CD14-positive monocyte (primary cell): ENCODE measurements at regions of chr5 and their contacts with region 1.

Region 1: GRCh38 chr5:61408476-61409168 is 76.6 kb downstream of the ZSWIM6 start:
- DNase-seq: peak; percentile 99 to 100 (median 100)
- H3K4me3 ChIP-seq: peak overlapping the region; percentile 18 to 70 (median 47)
- H3K4me3 Mint-ChIP-seq: peak overlapping the region; percentile 39 to 72
- H3K27ac ChIP-seq: peak overlapping the region in 1 of 2 donors; percentile 77
- H3K27ac Mint-ChIP-seq: peak overlapping the region; percentile 83 to 92 (median 89)
- H3K4me1 ChIP-seq: peaks cover 18 to 30% of the 10 kb centered on the region in 2 donors
- H3K4me1 Mint-ChIP-seq: peaks cover 28% of the 10 kb centered on the region
- H3K27me3 ChIP-seq: no peaks in the 10 kb centered on the region
- H3K27me3 Mint-ChIP-seq: no peaks in the 10 kb centered on the region
- CTCF ChIP-seq: no peak

Region 2: GRCh38 chr5:60944904-60945812 is 463.5 kb before region 1 on chr5 and contains the starts of genes ERCC8 and NDUFAF2:
- intact Hi-C with region 1: loop called in 1 of 2 experiments (anchors 10 kb)
- DNase-seq: peak; percentile 80 to 91 (median 89)
- H3K4me3 ChIP-seq: peak within 1 kb of the TSS; percentile 58 to 95 (median 85)
- H3K4me3 Mint-ChIP-seq: no peak within 1 kb of the TSS
- H3K27ac ChIP-seq: peak within 1 kb of the TSS; percentile 67 to 92
- H3K27ac Mint-ChIP-seq: peak within 1 kb of the TSS in 1 of 7 donors; percentile 67
- H3K4me1 ChIP-seq: peaks cover 25 to 26% of the 10 kb centered on the region in 2 donors
- H3K4me1 Mint-ChIP-seq: peaks cover 16% of the 10 kb centered on the region
- H3K27me3 ChIP-seq: no peaks in the 10 kb centered on the region
- H3K27me3 Mint-ChIP-seq: no peaks in the 10 kb centered on the region
- CTCF ChIP-seq: no peak
- polyA plus RNA-seq, gene ERCC8: 5.5 to 16.8 (median 10.6) TPM
- polyA plus RNA-seq, gene NDUFAF2: 5.9 to 29.5 (median 25.0) TPM

Region 3: GRCh38 chr5:61162010-61162831 is 246.4 kb before region 1 on chr5 and contains the start of gene SMIM15:
- intact Hi-C with region 1: loop called in 1 of 2 experiments (anchors 5 kb)
- DNase-seq: peak; percentile 94 to 95 (median 94)
- H3K4me3 ChIP-seq: peak within 1 kb of the TSS; percentile 59 to 96 (median 86)
- H3K4me3 Mint-ChIP-seq: peak within 1 kb of the TSS; percentile 99
- H3K27ac ChIP-seq: peak within 1 kb of the TSS; percentile 93 to 96
- H3K27ac Mint-ChIP-seq: peak within 1 kb of the TSS; percentile 97 to 99 (median 98)
- H3K4me1 ChIP-seq: peaks cover 27 to 44% of the 10 kb centered on the region in 2 donors
- H3K4me1 Mint-ChIP-seq: peaks cover 52% of the 10 kb centered on the region
- H3K27me3 ChIP-seq: no peaks in the 10 kb centered on the region
- H3K27me3 Mint-ChIP-seq: peaks cover 0 to 2% (median 0%) of the 10 kb centered on the region in 3 donors
- CTCF ChIP-seq: no peak
- polyA plus RNA-seq, gene SMIM15: 7.0 to 43.4 (median 32.0) TPM

Region 4: DNA sequence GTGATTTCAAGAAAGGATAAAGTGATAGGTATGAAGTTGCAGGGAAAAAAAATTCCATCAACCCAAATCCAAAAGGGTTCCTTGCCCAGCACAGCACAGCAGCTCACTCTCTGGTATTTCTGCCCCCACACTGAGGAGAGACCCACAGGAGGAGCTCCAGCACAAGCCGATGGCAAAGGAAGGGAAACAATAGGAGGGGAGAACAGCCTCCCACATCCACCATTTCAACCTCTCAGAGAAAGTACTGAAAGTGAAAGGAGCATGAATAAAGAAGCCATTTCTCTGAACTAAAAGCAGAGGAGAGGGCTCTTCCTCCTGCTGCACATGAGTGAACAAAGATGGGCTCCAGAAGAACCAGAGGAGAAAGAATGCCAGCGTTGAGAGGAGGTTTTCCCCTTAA is 131.4 kb before region 1 on chr5:
- intact Hi-C with region 1: loop called in 1 of 2 experiments (anchors 5 kb)
- DNase-seq: no peak
- H3K4me3 ChIP-seq: peak overlapping the region in 2 of 3 experiments; percentile 24 to 67
- H3K4me3 Mint-ChIP-seq: peak overlapping the region; percentile 70 to 88
- H3K27ac ChIP-seq: peak overlapping the region; percentile 94 to 95
- H3K27ac Mint-ChIP-seq: no peak overlapping the region
- H3K4me1 ChIP-seq: peaks cover 87 to 94% of the 10 kb centered on the region in 2 donors
- H3K4me1 Mint-ChIP-seq: peaks cover 18% of the 10 kb centered on the region
- H3K27me3 ChIP-seq: no peaks in the 10 kb centered on the region
- H3K27me3 Mint-ChIP-seq: peaks cover 0 to 6% (median 0%) of the 10 kb centered on the region in 3 donors
- CTCF ChIP-seq: no peak